GM12878 (cell line): ENCODE measurements at regions of chr12 and their contacts with region 1.

Region 1: DNA sequence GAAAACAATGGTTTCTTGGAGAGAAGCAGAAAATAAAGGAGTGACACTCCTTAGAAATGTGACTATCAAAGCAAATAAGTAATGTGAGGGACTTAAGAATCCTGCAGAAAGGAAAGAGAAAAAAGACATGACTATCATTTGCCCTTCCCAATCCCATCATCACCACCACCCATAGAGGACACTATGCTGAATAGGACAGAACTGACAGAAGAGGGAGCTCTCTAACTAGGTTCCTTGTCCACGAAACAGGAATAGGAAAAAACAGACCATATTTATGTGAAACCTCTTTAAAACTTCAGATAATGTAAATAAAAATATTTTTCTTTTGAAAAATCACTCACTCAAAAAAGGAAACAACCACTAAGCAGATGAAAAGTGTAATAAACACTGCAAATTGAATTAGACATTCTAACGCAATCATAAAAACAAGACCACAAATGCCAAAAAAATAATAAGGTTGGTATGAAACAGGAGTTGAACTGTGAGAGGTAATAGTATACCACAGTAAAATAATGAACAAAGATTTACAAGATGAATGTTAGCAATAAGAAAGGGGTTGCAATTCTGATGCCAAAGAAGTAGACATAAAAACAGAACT is 24.1 kb downstream of the KLRD1 start:
- DNase-seq: no peak
- ATAC-seq: peak; percentile 84
- H3K4me3 ChIP-seq: no peak overlapping the region
- H3K27ac ChIP-seq: no peak overlapping the region
- H3K4me1 ChIP-seq: no peaks in the 10 kb centered on the region
- H3K27me3 ChIP-seq: no peaks in the 10 kb centered on the region; a peak in 1 of 4 replicates
- CTCF ChIP-seq: peak; percentile 58 to 75 (median 63); a peak in 5 of 6 replicates
- EP300 ChIP-seq: no peak
- POLR2A ChIP-seq: no peak
- RAD21 ChIP-seq: peak; percentile 94

Region 2: GRCh38 chr12:8813572-8814357 is 1518.0 kb before region 1 on chr12:
- CTCF ChIA-PET with region 1: no interaction called
- POLR2A ChIA-PET with region 1: no interaction called
- RAD21 ChIA-PET with region 1: no interaction called
- SMC1A ChIA-PET with region 1: no interaction called
- in situ Hi-C with region 1: loop called (anchors 10 kb)
- intact Hi-C with region 1: no loop called
- DNase-seq: no peak
- ATAC-seq: no peak
- H3K4me3 ChIP-seq: no peak overlapping the region
- H3K27ac ChIP-seq: no peak overlapping the region
- H3K4me1 ChIP-seq: no peaks in the 10 kb centered on the region
- H3K27me3 ChIP-seq: 0 out of 4 replicates have a peak, but pooled peaks cover 0 to 1% of the 10 kb centered on the region in 2 experiments
- CTCF ChIP-seq: no peak
- EP300 ChIP-seq: no peak
- POLR2A ChIP-seq: no peak
- RAD21 ChIP-seq: no peak

Region 3: GRCh38 chr12:10235761-10236631 is 95.7 kb before region 1 on chr12:
- CTCF ChIA-PET with region 1: interaction called, 22 read pairs
- POLR2A ChIA-PET with region 1: no interaction called
- RAD21 ChIA-PET with region 1: interaction called, 14 read pairs
- SMC1A ChIA-PET with region 1: interaction called, 19 read pairs
- in situ Hi-C with region 1: no loop called
- intact Hi-C with region 1: loop called (anchors 2 kb)
- DNase-seq: no peak
- ATAC-seq: peak; percentile 73
- H3K4me3 ChIP-seq: no peak overlapping the region
- H3K27ac ChIP-seq: no peak overlapping the region
- H3K4me1 ChIP-seq: 0 out of 2 replicates have a peak, but pooled peaks cover 4% of the 10 kb centered on the region
- H3K27me3 ChIP-seq: no peaks in the 10 kb centered on the region; a peak in 1 of 4 replicates
- CTCF ChIP-seq: peak; percentile 66 to 80 (median 70)
- EP300 ChIP-seq: no peak
- POLR2A ChIP-seq: no peak
- RAD21 ChIP-seq: peak; percentile 94

Region 4: GRCh38 chr12:10293570-10294227 is 38.0 kb before region 1 on chr12:
- CTCF ChIA-PET with region 1: no interaction called
- POLR2A ChIA-PET with region 1: no interaction called
- RAD21 ChIA-PET with region 1: no interaction called
- SMC1A ChIA-PET with region 1: no interaction called
- in situ Hi-C with region 1: no loop called
- intact Hi-C with region 1: no loop called
- DNase-seq: no peak
- ATAC-seq: peak; percentile 51
- H3K4me3 ChIP-seq: no peak overlapping the region
- H3K27ac ChIP-seq: peak overlapping the region; percentile 33; the same call in 1 of the 2 replicates
- H3K4me1 ChIP-seq: no peaks in the 10 kb centered on the region; the same call in 1 of the 2 replicates
- H3K27me3 ChIP-seq: no peaks in the 10 kb centered on the region
- CTCF ChIP-seq: no peak
- EP300 ChIP-seq: no peak
- POLR2A ChIP-seq: no peak
- RAD21 ChIP-seq: no peak

Region 5: DNA sequence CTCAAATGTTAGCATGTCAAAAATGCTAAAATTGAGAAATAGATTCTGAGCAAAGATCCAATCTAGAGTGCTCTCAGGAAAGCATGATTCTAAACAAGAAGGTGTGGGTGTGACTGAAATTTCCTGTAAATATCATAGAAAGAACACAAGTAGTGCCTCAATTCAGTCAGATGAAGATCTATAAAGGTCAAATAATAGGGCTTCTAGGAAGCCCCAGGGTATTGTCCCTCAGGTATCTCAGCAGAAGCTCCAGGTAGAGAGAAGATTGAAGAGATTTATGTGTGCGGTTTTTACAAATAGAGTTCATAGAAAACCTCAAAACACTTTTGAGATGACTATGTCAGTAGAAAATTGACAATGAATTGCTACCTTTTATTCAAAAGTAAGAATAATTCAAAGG is 11.1 kb before region 1 on chr12:
- CTCF ChIA-PET with region 1: interaction called, 21 read pairs
- POLR2A ChIA-PET with region 1: no interaction called
- RAD21 ChIA-PET with region 1: interaction called, 5 read pairs
- SMC1A ChIA-PET with region 1: interaction called, 6 read pairs
- in situ Hi-C with region 1: no loop called
- intact Hi-C with region 1: no loop called
- DNase-seq: no peak
- ATAC-seq: peak; percentile 57
- H3K4me3 ChIP-seq: no peak overlapping the region
- H3K27ac ChIP-seq: no peak overlapping the region
- H3K4me1 ChIP-seq: 0 out of 2 replicates have a peak, but pooled peaks cover 6% of the 10 kb centered on the region
- H3K27me3 ChIP-seq: no peaks in the 10 kb centered on the region
- CTCF ChIP-seq: no peak
- EP300 ChIP-seq: no peak
- POLR2A ChIP-seq: no peak
- RAD21 ChIP-seq: 0 out of 2 replicates have a peak, but pooled peaks have one; percentile 0

Region 6: GRCh38 chr12:10364815-10365622 is 33.3 kb after region 1 on chr12:
- CTCF ChIA-PET with region 1: interaction called, 30 read pairs
- POLR2A ChIA-PET with region 1: no interaction called
- RAD21 ChIA-PET with region 1: interaction called, 21 read pairs
- SMC1A ChIA-PET with region 1: interaction called, 21 read pairs
- in situ Hi-C with region 1: no loop called
- intact Hi-C with region 1: no loop called
- DNase-seq: peak; percentile 53
- ATAC-seq: peak; percentile 71
- H3K4me3 ChIP-seq: peak overlapping the region; percentile 72
- H3K27ac ChIP-seq: peak overlapping the region; percentile 72
- H3K4me1 ChIP-seq: peaks cover 21% of the 10 kb centered on the region
- H3K27me3 ChIP-seq: no peaks in the 10 kb centered on the region
- CTCF ChIP-seq: no peak
- EP300 ChIP-seq: no peak
- POLR2A ChIP-seq: no peak
- RAD21 ChIP-seq: no peak

Region 7: GRCh38 chr12:10562306-10562933 is 230.7 kb after region 1 on chr12:
- CTCF ChIA-PET with region 1: interaction called, 57 read pairs
- POLR2A ChIA-PET with region 1: no interaction called
- RAD21 ChIA-PET with region 1: interaction called, 28 read pairs
- SMC1A ChIA-PET with region 1: interaction called, 13 read pairs
- in situ Hi-C with region 1: no loop called
- intact Hi-C with region 1: loop called (anchors 1 kb)
- DNase-seq: no peak
- ATAC-seq: peak; percentile 39; the same call in 2 of the 3 replicates
- H3K4me3 ChIP-seq: no peak overlapping the region
- H3K27ac ChIP-seq: no peak overlapping the region
- H3K4me1 ChIP-seq: peaks cover 4% of the 10 kb centered on the region
- H3K27me3 ChIP-seq: no peaks in the 10 kb centered on the region
- CTCF ChIP-seq: peak; percentile 45 to 69 (median 56); a peak in 5 of 6 replicates
- EP300 ChIP-seq: no peak
- POLR2A ChIP-seq: no peak
- RAD21 ChIP-seq: peak; percentile 96

Region 8: GRCh38 chr12:10673660-10674384 is 342.1 kb after region 1 on chr12 and contains the start of gene STYK1:
- CTCF ChIA-PET with region 1: no interaction called
- POLR2A ChIA-PET with region 1: no interaction called
- RAD21 ChIA-PET with region 1: no interaction called
- SMC1A ChIA-PET with region 1: no interaction called
- in situ Hi-C with region 1: no loop called
- intact Hi-C with region 1: loop called (anchors 10 kb)
- DNase-seq: peak; percentile 24
- ATAC-seq: peak; percentile 84
- H3K4me3 ChIP-seq: peak within 1 kb of the TSS; percentile 32
- H3K27ac ChIP-seq: no peak within 1 kb of the TSS
- H3K4me1 ChIP-seq: peaks cover 14% of the 10 kb centered on the region; the same call in 1 of the 2 replicates
- H3K27me3 ChIP-seq: peaks cover 0 to 2% of the 10 kb centered on the region in 2 experiments; a peak in 1 of 4 replicates
- CTCF ChIP-seq: peak; percentile 81 to 87 (median 83)
- EP300 ChIP-seq: no peak
- POLR2A ChIP-seq: no peak
- RAD21 ChIP-seq: peak; percentile 83
- polyA plus RNA-seq, gene STYK1: 0.73 to 0.87 TPM